Caco-2 (cell line): ENCODE measurements at regions of chr10 and their contacts with region 1.

Region 1: GRCh38 chr10:34187201-34187600 is 627.9 kb downstream of the PARD3 start:
- DNase-seq: no peak
- H3K4me3 ChIP-seq: no peak overlapping the region
- H3K4me3 Mint-ChIP-seq: no peak overlapping the region
- H3K27ac Mint-ChIP-seq: no peak overlapping the region
- H3K4me1 ChIP-seq: peaks cover 20% of the 10 kb centered on the region
- H3K4me1 Mint-ChIP-seq: peaks cover 34% of the 10 kb centered on the region
- H3K27me3 ChIP-seq: no peaks in the 10 kb centered on the region
- H3K27me3 Mint-ChIP-seq: no peaks in the 10 kb centered on the region
- CTCF ChIP-seq: no peak

Region 2: DNA sequence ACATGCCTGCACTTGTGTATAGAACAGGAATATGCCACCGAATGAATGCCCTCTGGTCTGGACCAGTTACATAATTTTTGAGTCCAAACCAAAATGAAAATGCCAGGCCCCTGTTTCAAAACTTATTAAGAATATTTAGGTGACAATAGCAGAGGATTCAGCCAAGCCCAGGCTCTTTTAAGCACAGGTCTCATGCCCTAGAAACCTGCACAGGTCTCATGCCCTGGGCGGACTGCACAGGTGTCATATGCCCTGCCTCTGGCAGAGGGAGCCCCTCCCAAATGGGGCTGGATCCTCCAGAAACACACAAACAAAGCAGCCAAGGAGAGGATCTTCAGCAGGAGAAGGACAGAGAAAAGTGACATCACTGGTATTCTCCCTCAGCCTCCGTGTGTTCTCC is 247.3 kb before region 1 on chr10:
- CTCF ChIA-PET with region 1: no interaction called
- POLR2A ChIA-PET with region 1: no interaction called
- intact Hi-C with region 1: no loop called
- DNase-seq: peak in 1 of 2 experiments; percentile 14
- H3K4me3 ChIP-seq: no peak overlapping the region
- H3K4me3 Mint-ChIP-seq: no peak overlapping the region
- H3K27ac Mint-ChIP-seq: no peak overlapping the region
- H3K4me1 ChIP-seq: 0 out of 2 replicates have a peak, but pooled peaks cover 4% of the 10 kb centered on the region
- H3K4me1 Mint-ChIP-seq: peaks cover 8% of the 10 kb centered on the region
- H3K27me3 ChIP-seq: no peaks in the 10 kb centered on the region
- H3K27me3 Mint-ChIP-seq: no peaks in the 10 kb centered on the region
- CTCF ChIP-seq: peak in 1 of 2 experiments; percentile 26

Region 3: GRCh38 chr10:34126371-34127151 is 60.6 kb before region 1 on chr10:
- CTCF ChIA-PET with region 1: no interaction called
- POLR2A ChIA-PET with region 1: no interaction called
- intact Hi-C with region 1: no loop called
- DNase-seq: no peak
- H3K4me3 ChIP-seq: no peak overlapping the region
- H3K4me3 Mint-ChIP-seq: no peak overlapping the region
- H3K27ac Mint-ChIP-seq: no peak overlapping the region
- H3K4me1 ChIP-seq: peaks cover 34% of the 10 kb centered on the region
- H3K4me1 Mint-ChIP-seq: peaks cover 31% of the 10 kb centered on the region
- H3K27me3 ChIP-seq: no peaks in the 10 kb centered on the region
- H3K27me3 Mint-ChIP-seq: no peaks in the 10 kb centered on the region
- CTCF ChIP-seq: no peak

Region 4: DNA sequence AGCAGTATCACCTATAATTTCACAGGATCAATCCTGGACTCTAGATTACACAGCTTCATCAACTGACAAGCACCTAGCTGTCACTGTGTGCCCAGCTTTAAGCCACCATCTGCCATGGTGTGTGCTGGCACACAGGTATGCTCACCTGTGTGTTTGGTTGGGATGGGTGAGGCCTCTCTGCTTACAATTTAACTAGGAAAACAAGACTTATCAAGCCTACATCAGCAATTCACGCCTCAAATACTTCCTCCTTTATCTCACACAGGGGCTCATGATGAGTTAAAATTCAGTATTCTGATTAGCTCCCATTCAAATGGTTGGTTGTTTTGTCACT is 19.7 kb after region 1 on chr10:
- CTCF ChIA-PET with region 1: no interaction called
- POLR2A ChIA-PET with region 1: no interaction called
- intact Hi-C with region 1: loop called (anchors 1 kb)
- DNase-seq: no peak
- H3K4me3 ChIP-seq: no peak overlapping the region
- H3K4me3 Mint-ChIP-seq: no peak overlapping the region
- H3K27ac Mint-ChIP-seq: peak overlapping the region; percentile 19
- H3K4me1 ChIP-seq: peaks cover 24% of the 10 kb centered on the region
- H3K4me1 Mint-ChIP-seq: peaks cover 45% of the 10 kb centered on the region
- H3K27me3 ChIP-seq: no peaks in the 10 kb centered on the region
- H3K27me3 Mint-ChIP-seq: no peaks in the 10 kb centered on the region
- CTCF ChIP-seq: no peak

Region 5: DNA sequence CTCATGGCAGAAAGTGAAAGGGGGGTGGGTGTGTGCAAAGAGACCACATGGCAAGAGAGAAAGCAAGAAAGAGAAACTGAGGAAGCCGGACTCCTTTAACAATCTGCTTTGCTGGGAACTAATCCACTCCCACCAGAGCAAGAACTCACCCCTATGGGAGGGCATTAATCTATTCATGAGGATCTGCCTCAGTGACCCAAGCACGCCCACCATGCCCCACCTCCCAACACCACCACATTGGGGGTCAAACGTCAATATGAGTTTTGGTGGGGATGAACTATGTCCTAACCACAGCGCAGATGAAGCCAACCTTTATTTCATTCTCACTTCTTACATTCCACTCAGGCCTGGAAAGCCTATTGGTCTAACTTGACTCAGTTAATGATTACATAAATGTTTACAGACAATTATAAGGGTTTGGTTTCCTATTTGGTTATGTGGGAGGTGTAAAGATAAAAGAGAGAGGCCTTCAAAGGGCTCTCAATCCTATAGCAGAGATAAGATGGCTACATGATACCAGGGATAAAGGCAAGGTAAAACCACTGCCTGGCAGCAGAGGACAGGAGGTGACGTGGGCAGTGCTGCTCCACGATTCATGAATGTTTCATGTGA is 26.1 kb after region 1 on chr10:
- CTCF ChIA-PET with region 1: no interaction called
- POLR2A ChIA-PET with region 1: no interaction called
- intact Hi-C with region 1: loop called (anchors 1 kb)
- DNase-seq: peak; percentile 82 to 85
- H3K4me3 ChIP-seq: no peak overlapping the region
- H3K4me3 Mint-ChIP-seq: peak overlapping the region; percentile 51
- H3K27ac Mint-ChIP-seq: peak overlapping the region; percentile 79
- H3K4me1 ChIP-seq: peaks cover 47% of the 10 kb centered on the region
- H3K4me1 Mint-ChIP-seq: peaks cover 54% of the 10 kb centered on the region
- H3K27me3 ChIP-seq: no peaks in the 10 kb centered on the region
- H3K27me3 Mint-ChIP-seq: no peaks in the 10 kb centered on the region
- CTCF ChIP-seq: peak in 1 of 2 experiments; percentile 47

Region 6: GRCh38 chr10:34219753-34220548 is 32.8 kb after region 1 on chr10:
- CTCF ChIA-PET with region 1: no interaction called
- POLR2A ChIA-PET with region 1: no interaction called
- intact Hi-C with region 1: loop called (anchors 1 kb)
- DNase-seq: no peak
- H3K4me3 ChIP-seq: no peak overlapping the region
- H3K4me3 Mint-ChIP-seq: no peak overlapping the region
- H3K27ac Mint-ChIP-seq: no peak overlapping the region
- H3K4me1 ChIP-seq: peaks cover 41% of the 10 kb centered on the region
- H3K4me1 Mint-ChIP-seq: peaks cover 50% of the 10 kb centered on the region
- H3K27me3 ChIP-seq: no peaks in the 10 kb centered on the region
- H3K27me3 Mint-ChIP-seq: no peaks in the 10 kb centered on the region
- CTCF ChIP-seq: no peak

Region 7: DNA sequence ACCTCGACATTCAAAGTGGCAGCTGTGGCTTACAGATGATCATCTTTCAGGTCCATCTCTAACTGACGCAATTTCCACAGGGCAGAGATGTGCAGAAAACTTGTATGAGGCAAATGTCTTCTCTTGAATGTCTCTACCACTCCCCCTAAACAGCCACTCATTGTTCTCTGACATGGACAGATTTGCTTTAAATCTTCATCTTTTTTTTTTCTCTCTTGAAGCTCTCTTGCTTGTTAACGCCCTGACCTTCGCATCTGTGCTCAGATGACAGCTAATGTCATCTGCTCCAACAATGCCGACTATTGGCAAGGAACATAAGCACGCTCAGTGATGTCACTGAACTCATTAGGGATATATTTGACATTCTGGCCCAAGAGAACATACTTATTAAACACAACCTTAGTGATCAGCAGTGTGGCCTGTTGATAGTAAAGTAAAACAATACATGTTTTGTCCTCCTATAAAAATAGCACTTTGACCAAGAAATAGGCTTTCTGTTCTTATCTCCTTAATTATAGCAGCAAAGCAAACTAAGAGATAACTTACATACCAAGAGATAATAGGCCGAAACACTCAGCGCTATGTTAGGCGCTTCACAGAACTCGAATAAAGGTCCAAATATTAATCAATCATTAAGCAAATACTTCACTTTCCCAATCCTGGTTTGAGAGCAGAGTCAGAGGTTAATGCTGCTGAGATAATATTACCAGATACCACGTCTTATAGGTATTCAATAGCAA is 44.4 kb after region 1 on chr10:
- CTCF ChIA-PET with region 1: no interaction called
- POLR2A ChIA-PET with region 1: no interaction called
- intact Hi-C with region 1: loop called (anchors 1 kb)
- DNase-seq: peak; percentile 68 to 79
- H3K4me3 ChIP-seq: no peak overlapping the region
- H3K4me3 Mint-ChIP-seq: peak overlapping the region; percentile 4
- H3K27ac Mint-ChIP-seq: peak overlapping the region; percentile 3
- H3K4me1 ChIP-seq: peaks cover 35% of the 10 kb centered on the region
- H3K4me1 Mint-ChIP-seq: peaks cover 23% of the 10 kb centered on the region
- H3K27me3 ChIP-seq: no peaks in the 10 kb centered on the region
- H3K27me3 Mint-ChIP-seq: no peaks in the 10 kb centered on the region
- CTCF ChIP-seq: no peak

Region 8: GRCh38 chr10:34305190-34305589 is 118.0 kb after region 1 on chr10:
- CTCF ChIA-PET with region 1: no interaction called
- POLR2A ChIA-PET with region 1: no interaction called
- intact Hi-C with region 1: loop called (anchors 5 kb)
- DNase-seq: peak; percentile 90 to 92
- H3K4me3 ChIP-seq: no peak overlapping the region
- H3K4me3 Mint-ChIP-seq: no peak overlapping the region
- H3K27ac Mint-ChIP-seq: peak overlapping the region; percentile 48
- H3K4me1 ChIP-seq: no peaks in the 10 kb centered on the region; the same call in 1 of the 2 replicates
- H3K4me1 Mint-ChIP-seq: peaks cover 7% of the 10 kb centered on the region
- H3K27me3 ChIP-seq: no peaks in the 10 kb centered on the region
- H3K27me3 Mint-ChIP-seq: no peaks in the 10 kb centered on the region
- CTCF ChIP-seq: peak; percentile 58 to 84